ENCODE measurements at regions of chr17 and their contacts with region 1.

Region 1: DNA sequence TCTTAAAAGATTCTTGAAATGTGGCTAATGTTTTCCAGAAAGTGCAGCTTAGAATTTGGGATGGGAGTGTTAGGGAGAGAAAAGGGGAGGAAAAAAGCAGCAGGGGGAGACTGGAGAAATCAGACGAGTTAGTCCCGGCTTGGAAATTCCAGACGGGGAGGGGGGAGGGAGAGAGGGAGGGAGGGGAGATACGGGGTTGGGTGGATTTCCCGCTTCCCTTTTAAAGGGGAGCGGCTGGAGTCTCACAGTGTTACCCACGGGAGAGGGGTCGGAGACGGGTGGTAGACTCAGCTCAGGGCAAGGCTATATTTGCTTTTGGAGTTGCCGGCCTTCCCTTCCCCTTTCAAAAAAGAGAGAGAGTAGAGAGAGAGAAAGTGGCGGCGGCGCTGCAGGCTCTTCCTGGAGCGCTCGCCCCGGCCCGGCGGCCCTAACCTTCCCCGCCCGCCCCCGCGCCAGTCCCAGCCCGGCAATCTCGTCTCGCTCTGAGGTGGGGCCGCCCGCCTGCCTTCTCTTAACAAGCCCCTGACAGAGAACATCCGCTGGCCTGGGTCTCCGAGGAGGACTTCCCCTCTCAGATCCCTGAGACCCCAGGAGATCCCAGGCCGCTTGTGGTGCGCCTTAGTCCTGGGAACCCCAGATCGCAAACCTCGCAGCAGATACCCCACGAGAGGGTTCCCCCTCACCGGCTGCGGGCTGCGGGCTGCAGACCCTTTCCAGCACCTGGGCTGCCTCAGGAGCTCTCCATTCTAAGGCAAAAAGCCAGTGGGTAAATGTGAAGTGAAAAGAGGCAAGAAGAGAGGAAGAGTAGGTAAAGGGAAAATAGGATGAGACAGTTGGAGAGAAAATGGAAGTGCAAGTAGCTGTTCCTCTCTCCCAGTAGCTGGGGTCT is 6.7 kb downstream of the IGF2BP1 start:
- DNase-seq: peak; percentile 42 to 85
- H3K4me3 ChIP-seq: no peak overlapping the region
- H3K27ac ChIP-seq: no peak overlapping the region
- H3K4me1 ChIP-seq: no peaks in the 10 kb centered on the region
- H3K27me3 ChIP-seq: peaks cover 4% of the 10 kb centered on the region
- CTCF ChIP-seq: no peak
- POLR2A ChIP-seq: no peak

Region 2: DNA sequence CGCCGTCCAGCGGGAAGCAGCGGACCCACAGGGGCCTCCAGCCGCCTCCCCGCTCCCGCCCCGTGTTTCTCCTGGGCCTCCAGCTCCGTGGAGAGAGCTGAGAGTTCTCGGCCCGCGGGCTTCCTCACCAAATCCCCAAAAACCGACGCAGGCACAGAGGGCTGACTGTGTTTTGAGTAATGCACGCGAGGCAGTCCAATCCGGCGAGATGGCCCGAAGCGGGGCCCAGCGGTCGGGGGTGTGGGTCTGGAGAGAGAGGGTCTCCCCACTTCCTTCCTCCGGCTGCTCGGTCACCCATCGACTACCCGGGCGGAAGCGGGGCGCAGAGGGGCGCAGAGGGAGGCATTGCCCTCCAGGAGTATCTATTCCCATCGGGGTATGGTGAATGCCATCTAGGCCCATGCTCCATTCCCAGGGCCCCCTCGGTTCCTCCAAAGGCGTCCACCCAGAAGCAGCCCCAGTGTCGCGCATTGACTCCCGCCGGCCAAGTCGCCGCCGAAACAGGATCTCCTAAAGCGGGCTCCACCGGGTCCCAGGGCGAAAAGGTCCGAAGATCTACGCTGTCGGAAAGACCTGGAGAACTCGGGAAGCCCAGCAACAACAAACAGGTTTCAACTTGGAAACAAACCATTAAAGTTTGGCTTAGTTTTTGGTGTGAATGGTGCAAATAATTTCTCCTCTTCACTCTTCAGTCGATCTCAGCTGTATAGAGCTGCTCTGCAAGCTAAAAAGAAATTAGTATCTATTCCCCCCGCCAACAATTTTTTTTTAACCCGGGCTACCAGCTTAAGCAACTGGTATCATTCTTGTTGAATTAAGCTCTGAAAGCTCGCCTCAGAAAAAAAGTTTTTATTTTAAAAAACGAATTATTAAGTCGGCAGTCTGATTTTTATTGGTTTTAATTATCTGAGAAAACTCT is 256.2 kb before region 1 on chr17:
- intact Hi-C with region 1: loop called (anchors 10 kb)
- DNase-seq: no peak
- H3K4me3 ChIP-seq: peak overlapping the region in 1 of 2 donors; percentile 26
- H3K27ac ChIP-seq: peak overlapping the region; percentile 72
- H3K4me1 ChIP-seq: peaks cover 36% of the 10 kb centered on the region
- H3K27me3 ChIP-seq: peaks cover 25% of the 10 kb centered on the region
- CTCF ChIP-seq: no peak
- POLR2A ChIP-seq: no peak

Region 3: GRCh38 chr17:48760411-48760810 is 243.5 kb before region 1 on chr17:
- intact Hi-C with region 1: no loop called
- DNase-seq: no peak
- H3K4me3 ChIP-seq: no peak overlapping the region
- H3K27ac ChIP-seq: no peak overlapping the region
- H3K4me1 ChIP-seq: no peaks in the 10 kb centered on the region
- H3K27me3 ChIP-seq: no peaks in the 10 kb centered on the region
- CTCF ChIP-seq: no peak
- POLR2A ChIP-seq: no peak

Measured in vagina (tissue), 2 donors.